A673 (cell line): ENCODE measurements at regions of chr6 and their contacts with region 1.

Region 1: DNA sequence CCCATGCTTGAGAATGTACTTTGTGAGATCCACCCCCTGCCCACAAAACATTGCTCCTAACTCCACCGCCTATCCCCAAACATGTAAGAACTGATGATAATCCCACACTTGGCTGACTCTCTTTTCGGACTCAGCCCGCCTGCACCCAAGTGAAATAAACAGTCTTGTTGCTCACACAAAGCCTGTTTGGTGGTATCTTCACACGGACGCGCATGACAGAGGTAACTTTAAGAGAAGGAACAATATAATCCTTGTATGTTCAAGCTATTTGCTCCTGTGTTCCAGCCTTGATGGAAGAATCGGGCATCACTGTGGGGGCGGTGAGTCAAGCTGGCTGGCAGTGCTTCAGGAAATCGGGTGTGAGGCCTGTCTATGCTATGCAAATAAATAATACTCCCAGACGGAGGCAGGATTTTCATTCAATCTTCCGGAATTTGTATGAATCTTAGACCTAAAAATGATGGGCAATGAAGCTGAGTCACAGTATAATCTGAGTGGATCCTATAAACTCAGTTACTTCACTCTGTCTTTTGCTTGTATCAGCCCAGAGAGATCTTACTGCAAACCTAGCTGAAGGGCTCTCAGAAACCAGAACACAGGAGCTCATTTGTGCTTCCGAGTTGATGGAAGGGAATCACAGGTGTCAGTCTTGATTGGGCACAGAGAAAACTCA is 45.2 kb upstream of the NT5E start:
- DNase-seq: peak; percentile 94
- H3K4me3 ChIP-seq: peak overlapping the region; percentile 5
- H3K27ac ChIP-seq: peak overlapping the region; percentile 94
- H3K4me1 ChIP-seq: peaks cover 57% of the 10 kb centered on the region
- H3K27me3 ChIP-seq: no peaks in the 10 kb centered on the region
- CTCF ChIP-seq: no peak

Region 2: GRCh38 chr6:84606860-84607259 is 797.8 kb before region 1 on chr6:
- CTCF ChIA-PET with region 1: no interaction called
- POLR2A ChIA-PET with region 1: no interaction called
- intact Hi-C with region 1: no loop called
- DNase-seq: no peak
- H3K4me3 ChIP-seq: no peak overlapping the region
- H3K27ac ChIP-seq: no peak overlapping the region
- H3K4me1 ChIP-seq: no peaks in the 10 kb centered on the region
- H3K27me3 ChIP-seq: no peaks in the 10 kb centered on the region
- CTCF ChIP-seq: no peak

Region 3: DNA sequence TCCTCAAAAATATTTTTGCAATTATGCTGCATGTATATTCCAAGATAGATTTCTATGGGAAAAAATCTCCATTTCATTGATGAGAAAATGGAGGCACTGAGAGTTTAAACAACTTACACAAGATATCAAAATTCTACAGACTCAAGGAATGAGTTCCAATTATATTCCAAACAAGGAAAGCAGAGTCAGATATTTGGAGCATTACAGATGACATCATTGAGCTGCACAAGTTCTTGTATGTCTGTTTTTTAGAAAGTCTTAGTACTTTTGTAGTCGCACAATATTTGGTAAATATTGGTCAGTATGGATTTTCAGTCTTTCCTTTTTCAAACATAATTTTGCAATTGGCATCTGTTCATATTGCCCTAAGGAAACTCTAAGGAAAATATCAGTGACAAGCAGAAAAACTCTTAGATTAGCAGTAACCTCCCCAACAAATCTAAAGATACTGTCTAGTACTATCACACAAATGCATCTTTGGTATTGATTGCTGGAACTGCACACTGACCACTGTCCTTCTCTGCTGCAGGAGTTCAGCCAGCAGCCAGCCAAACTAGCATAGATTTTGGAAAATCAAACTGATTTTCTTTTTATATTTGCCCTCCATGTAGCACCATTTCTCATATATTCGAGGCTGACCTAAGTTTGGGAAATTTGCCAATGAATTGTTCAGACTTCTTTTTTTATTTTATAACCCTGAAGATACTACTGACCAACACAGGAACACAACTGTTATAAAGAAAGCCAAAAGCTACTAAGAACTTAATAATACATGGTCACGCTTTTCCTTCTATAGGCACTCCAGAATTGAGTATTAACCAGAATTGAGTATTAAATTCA is 588.5 kb before region 1 on chr6:
- CTCF ChIA-PET with region 1: no interaction called
- POLR2A ChIA-PET with region 1: no interaction called
- intact Hi-C with region 1: no loop called
- DNase-seq: no peak
- H3K4me3 ChIP-seq: no peak overlapping the region
- H3K27ac ChIP-seq: no peak overlapping the region
- H3K4me1 ChIP-seq: no peaks in the 10 kb centered on the region
- H3K27me3 ChIP-seq: no peaks in the 10 kb centered on the region
- CTCF ChIP-seq: no peak

Region 4: GRCh38 chr6:85354761-85355618 is 49.6 kb before region 1 on chr6:
- CTCF ChIA-PET with region 1: no interaction called
- POLR2A ChIA-PET with region 1: no interaction called
- intact Hi-C with region 1: loop called (anchors 5 kb)
- DNase-seq: peak; percentile 87
- H3K4me3 ChIP-seq: no peak overlapping the region
- H3K27ac ChIP-seq: no peak overlapping the region
- H3K4me1 ChIP-seq: no peaks in the 10 kb centered on the region
- H3K27me3 ChIP-seq: no peaks in the 10 kb centered on the region
- CTCF ChIP-seq: peak; percentile 95

Region 5: DNA sequence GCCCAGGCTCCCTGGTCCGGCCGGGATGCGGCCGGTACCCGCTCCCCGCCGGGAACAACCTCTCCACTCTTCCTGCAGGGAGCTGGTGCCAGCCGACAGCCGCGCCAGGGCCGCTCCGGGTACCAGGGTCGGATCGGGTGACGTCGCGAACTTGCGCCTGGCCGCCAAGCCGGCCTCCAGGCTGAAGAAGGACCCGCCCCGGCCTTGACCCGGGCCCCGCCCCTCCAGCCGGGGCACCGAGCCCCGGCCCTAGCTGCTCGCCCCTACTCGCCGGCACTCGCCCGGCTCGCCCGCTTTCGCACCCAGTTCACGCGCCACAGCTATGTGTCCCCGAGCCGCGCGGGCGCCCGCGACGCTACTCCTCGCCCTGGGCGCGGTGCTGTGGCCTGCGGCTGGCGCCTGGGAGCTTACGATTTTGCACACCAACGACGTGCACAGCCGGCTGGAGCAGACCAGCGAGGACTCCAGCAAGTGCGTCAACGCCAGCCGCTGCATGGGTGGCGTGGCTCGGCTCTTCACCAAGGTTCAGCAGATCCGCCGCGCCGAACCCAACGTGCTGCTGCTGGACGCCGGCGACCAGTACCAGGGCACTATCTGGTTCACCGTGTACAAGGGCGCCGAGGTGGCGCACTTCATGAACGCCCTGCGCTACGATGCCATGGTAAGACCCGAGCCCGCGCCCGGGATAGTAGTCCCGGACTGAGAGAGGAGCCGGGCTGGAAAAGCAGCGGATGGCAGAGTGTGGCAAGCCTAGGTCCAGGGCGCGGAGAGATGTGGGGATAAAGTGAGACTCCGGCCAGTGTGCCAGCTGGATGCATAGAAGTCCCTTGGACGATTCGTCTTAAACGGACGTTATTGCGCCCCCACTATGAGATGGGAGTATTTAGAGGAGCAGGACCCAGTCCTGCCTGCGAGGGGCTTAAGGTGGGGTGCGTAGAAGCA is 45.5 kb after region 1 on chr6 and contains the start of gene NT5E:
- CTCF ChIA-PET with region 1: interaction called, 8 read pairs
- POLR2A ChIA-PET with region 1: no interaction called
- intact Hi-C with region 1: loop called (anchors 2 kb)
- DNase-seq: peak; percentile 83
- H3K4me3 ChIP-seq: peak within 1 kb of the TSS; percentile 60
- H3K27ac ChIP-seq: peak within 1 kb of the TSS; percentile 67
- H3K4me1 ChIP-seq: peaks cover 5% of the 10 kb centered on the region
- H3K27me3 ChIP-seq: peaks cover 5% of the 10 kb centered on the region
- CTCF ChIP-seq: peak; percentile 35; the same call in 1 of the 2 replicates
- total RNA-seq, gene NT5E: 26.0 and 32.7 TPM in 2 replicates

Region 6: GRCh38 chr6:85460921-85461797 is 56.5 kb after region 1 on chr6:
- CTCF ChIA-PET with region 1: no interaction called
- POLR2A ChIA-PET with region 1: interaction called, 5 read pairs
- intact Hi-C with region 1: loop called (anchors 2 kb)
- DNase-seq: no peak
- H3K4me3 ChIP-seq: no peak overlapping the region
- H3K27ac ChIP-seq: no peak overlapping the region
- H3K4me1 ChIP-seq: peaks cover 70% of the 10 kb centered on the region
- H3K27me3 ChIP-seq: no peaks in the 10 kb centered on the region
- CTCF ChIP-seq: no peak

Region 7: DNA sequence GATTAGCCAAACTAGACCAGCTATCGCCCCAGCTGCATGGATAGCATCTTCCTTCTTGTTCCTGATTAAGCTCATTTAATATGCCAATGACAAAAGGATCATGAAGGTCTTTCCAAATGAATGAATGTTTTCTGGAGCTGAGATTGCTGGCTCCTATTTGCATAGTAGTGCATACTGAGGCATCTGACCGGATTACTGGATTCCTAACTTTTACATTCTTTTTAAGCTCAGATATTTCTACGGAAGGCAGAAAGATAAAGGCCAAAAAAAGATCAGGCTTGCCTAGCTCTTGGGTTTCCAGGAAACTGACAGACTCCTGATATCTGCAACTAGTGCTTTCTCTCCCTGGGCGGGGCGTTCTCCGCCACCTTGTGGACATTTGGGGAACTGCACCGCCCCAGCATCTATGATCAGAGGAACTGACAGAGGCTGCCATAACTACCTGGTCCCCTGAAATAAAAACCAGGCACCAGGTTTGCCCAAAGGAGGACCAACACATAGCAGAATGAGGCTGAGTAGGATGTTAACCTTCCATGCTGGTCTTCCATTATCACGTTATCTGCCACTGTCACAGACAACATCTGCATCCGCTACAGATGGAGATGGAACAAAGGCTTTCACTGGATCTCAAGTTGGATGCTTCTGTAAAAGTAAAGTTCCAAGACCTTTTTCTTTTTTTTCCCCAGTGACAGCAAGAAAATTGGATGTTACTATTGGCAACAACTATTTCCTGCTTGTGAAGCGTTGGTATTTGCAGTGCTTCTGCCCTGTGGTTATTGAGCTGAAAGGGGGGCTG is 78.5 kb after region 1 on chr6:
- CTCF ChIA-PET with region 1: interaction called, 7 read pairs
- POLR2A ChIA-PET with region 1: no interaction called
- intact Hi-C with region 1: loop called (anchors 1 kb)
- DNase-seq: peak; percentile 83
- H3K4me3 ChIP-seq: no peak overlapping the region
- H3K27ac ChIP-seq: no peak overlapping the region
- H3K4me1 ChIP-seq: no peaks in the 10 kb centered on the region
- H3K27me3 ChIP-seq: no peaks in the 10 kb centered on the region
- CTCF ChIP-seq: peak; percentile 99

Region 8: GRCh38 chr6:85569323-85569722 is 164.7 kb after region 1 on chr6:
- CTCF ChIA-PET with region 1: no interaction called
- POLR2A ChIA-PET with region 1: no interaction called
- intact Hi-C with region 1: loop called (anchors 5 kb)
- DNase-seq: peak; percentile 50
- H3K4me3 ChIP-seq: no peak overlapping the region
- H3K27ac ChIP-seq: no peak overlapping the region
- H3K4me1 ChIP-seq: no peaks in the 10 kb centered on the region
- H3K27me3 ChIP-seq: no peaks in the 10 kb centered on the region
- CTCF ChIP-seq: no peak

Region 9: DNA sequence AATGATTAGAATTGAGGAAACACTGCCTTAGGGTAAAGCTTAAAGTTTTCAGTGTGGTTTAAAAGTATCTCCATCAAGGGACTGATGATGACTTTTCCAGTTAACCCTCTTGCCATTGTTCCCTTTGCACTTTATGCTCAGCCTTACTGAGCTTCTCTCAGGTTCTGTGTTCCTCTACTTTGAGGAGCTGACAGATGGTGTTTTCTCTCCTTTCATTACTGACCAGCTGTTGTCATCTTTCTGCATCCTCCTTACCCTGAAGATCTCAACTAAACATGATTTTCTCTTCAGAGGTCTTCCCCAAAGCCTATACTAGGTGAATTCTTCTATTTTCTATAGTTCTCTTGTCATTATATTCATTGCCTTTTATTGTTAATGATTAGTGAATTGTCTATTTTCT is 713.6 kb after region 1 on chr6:
- CTCF ChIA-PET with region 1: no interaction called
- POLR2A ChIA-PET with region 1: no interaction called
- intact Hi-C with region 1: no loop called
- DNase-seq: no peak
- H3K4me3 ChIP-seq: no peak overlapping the region
- H3K27ac ChIP-seq: no peak overlapping the region
- H3K4me1 ChIP-seq: no peaks in the 10 kb centered on the region
- H3K27me3 ChIP-seq: no peaks in the 10 kb centered on the region
- CTCF ChIP-seq: no peak